Naive thymus-derived CD4-positive, alpha-beta T cell (primary cell): ENCODE measurements at regions of chr19 and their contacts with region 1.

Region 1: GRCh38 chr19:40716655-40717324 is at the starts of genes COQ8B and ITPKC:
- DNase-seq: peak; percentile 96 to 100 (median 99)
- ATAC-seq: peak; percentile 88
- H3K4me3 ChIP-seq: peak within 1 kb of the TSS; percentile 75
- H3K4me3 Mint-ChIP-seq: peak within 1 kb of the TSS; percentile 87 to 99 (median 94)
- H3K27ac ChIP-seq: peak within 1 kb of the TSS; percentile 92
- H3K27ac Mint-ChIP-seq: peak within 1 kb of the TSS; percentile 94 to 99 (median 97)
- H3K4me1 ChIP-seq: peaks cover 39 to 44% of the 10 kb centered on the region in 2 donors
- H3K4me1 Mint-ChIP-seq: peaks cover 42 to 74% (median 67%) of the 10 kb centered on the region in 7 donors
- H3K27me3 ChIP-seq: no peaks in the 10 kb centered on the region
- H3K27me3 Mint-ChIP-seq: no peaks in the 10 kb centered on the region
- total RNA-seq, gene COQ8B: 26.2 to 48.3 (median 43.8) TPM
- total RNA-seq, gene ITPKC: 4.9 to 9.0 (median 7.3) TPM

Region 2: DNA sequence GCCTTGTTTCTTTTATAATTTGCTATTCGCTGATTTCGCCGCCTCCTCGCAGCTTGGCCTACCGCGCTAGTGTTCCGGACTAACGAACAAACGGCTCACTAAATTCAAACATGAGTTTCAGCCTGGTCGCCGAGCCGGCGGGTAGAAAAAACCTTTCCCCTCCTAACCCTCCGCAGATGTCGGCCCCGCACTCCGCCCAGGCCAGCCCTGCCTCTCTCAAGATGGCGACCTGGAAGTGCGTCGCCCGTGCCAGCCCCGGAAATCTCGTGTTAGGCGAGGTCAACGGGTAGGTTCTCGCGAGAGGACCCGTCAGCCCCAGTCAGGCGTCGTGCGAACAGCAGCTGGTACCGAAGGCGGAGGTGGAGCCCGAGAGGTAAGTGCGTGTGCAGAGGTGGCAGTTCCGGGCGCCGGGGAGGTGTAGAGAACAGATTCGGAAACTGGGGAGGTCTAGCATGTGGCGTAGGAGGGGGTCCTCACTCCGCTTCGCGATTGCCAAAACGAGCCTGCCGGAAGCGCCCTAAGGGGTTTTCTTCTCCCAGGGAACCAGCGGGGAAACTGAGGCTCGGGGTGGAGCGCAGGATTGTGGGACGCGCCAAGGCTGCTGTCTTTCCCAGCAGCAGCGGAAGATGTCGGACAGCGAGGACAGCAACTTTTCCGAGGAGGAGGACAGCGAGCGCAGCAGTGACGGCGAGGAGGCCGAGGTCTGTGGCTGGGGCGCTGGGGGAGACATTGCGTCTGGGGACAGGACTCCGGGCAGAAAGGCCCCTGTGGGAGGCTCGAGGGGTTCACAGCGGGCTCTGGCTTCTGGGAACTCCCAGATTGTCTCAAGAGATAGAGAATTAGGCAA is 1271.3 kb before region 1 on chr19 and contains the start of gene SUPT5H:
- CTCF ChIA-PET with region 1: no interaction called
- POLR2A ChIA-PET with region 1: no interaction called
- intact Hi-C with region 1: loop called in 1 of 2 experiments (anchors 10 kb)
- DNase-seq: peak; percentile 84 to 99 (median 97)
- ATAC-seq: peak; percentile 96
- H3K4me3 ChIP-seq: peak within 1 kb of the TSS; percentile 77
- H3K4me3 Mint-ChIP-seq: peak within 1 kb of the TSS; percentile 91 to 100 (median 97)
- H3K27ac ChIP-seq: peak within 1 kb of the TSS; percentile 98
- H3K27ac Mint-ChIP-seq: peak within 1 kb of the TSS; percentile 95 to 100 (median 99)
- H3K4me1 ChIP-seq: peaks cover 35 to 47% of the 10 kb centered on the region in 2 donors
- H3K4me1 Mint-ChIP-seq: peaks cover 38 to 61% (median 48%) of the 10 kb centered on the region in 7 donors
- H3K27me3 ChIP-seq: no peaks in the 10 kb centered on the region
- H3K27me3 Mint-ChIP-seq: no peaks in the 10 kb centered on the region
- total RNA-seq, gene SUPT5H: 180 to 247 (median 203) TPM

Region 3: DNA sequence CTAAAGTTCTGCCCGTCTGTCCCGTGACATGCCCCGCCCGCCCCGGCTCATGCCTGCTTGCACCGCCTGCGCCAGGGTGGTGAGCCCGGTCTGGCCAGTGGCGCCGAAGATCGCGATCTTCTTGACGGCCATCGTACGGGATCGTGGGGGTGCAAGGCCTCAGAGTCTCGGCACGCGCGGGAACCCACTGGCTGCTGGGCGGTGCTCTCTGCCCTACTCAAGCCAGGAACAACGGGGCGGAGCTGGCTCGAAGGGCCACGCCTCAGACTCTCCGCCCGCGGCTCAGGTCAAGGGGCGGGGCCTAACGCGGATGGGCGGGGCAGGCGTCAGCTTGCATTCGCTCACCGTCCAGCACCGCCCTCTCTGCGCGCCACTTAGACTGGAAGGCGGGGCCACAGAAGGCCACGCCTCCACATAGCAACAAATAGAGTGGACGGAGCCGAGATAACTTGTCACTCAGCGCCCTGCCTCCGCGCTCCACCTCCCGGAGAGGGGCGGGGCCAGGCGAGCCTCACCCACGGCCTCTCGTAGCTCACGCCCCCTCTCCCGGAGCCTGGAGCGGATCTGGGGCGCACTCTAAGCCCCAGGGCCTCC is 251.1 kb before region 1 on chr19 and contains the start of gene BLVRB:
- CTCF ChIA-PET with region 1: no interaction called
- POLR2A ChIA-PET with region 1: no interaction called
- intact Hi-C with region 1: loop called (anchors 5 to 10 kb)
- DNase-seq: peak; percentile 98 to 100 (median 99)
- ATAC-seq: peak; percentile 90
- H3K4me3 ChIP-seq: peak within 1 kb of the TSS; percentile 44
- H3K4me3 Mint-ChIP-seq: peak within 1 kb of the TSS; percentile 83 to 95 (median 86)
- H3K27ac ChIP-seq: peak within 1 kb of the TSS; percentile 66
- H3K27ac Mint-ChIP-seq: peak within 1 kb of the TSS; percentile 70 to 94 (median 87)
- H3K4me1 ChIP-seq: peaks cover 0 to 7% of the 10 kb centered on the region in 2 donors
- H3K4me1 Mint-ChIP-seq: peaks cover 18 to 27% (median 25%) of the 10 kb centered on the region in 7 donors
- H3K27me3 ChIP-seq: peaks cover 3 to 4% of the 10 kb centered on the region in 2 donors
- H3K27me3 Mint-ChIP-seq: peaks cover 6 to 28% (median 7%) of the 10 kb centered on the region in 5 donors
- total RNA-seq, gene BLVRB: 11.0 to 42.2 (median 13.3) TPM

Region 4: DNA sequence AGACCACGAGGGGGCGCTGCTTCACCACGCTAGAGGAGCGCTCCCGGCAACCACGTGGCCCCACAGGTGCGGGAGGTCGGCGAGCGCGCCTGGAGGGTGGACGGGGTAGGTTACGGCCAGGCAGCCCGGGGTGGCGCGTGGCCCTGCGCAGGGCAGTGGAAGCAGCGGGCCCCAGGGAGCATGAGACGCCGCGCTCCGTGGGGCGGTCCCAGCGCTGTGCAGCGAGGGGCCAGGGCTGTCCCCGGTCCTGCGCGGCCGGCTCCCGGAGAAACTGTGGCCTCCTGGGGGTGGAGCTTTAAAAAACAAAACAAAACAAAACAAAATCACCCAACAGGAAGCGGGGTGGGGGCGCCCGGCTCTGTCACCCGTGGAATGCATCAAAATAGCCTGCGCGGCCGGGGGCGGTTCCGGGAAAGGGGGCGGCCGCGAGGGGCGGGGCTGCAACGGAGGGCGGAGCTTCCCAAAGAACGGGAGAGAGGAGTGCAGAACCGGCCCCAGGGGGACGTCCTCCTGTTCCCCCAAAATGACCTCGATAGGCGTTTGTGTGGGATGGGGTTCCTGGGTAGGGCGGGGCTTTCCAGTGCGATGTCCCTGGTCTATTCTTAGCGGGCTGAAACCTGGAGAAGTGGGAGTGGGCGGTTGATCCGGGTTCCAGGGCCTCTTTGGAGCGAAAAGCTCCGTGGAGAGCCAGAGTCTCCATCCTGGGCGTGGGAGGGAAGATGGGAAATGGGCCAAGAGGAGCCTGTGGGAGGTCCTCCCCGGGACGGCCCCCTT is 53.7 kb before region 1 on chr19:
- CTCF ChIA-PET with region 1: interaction called, 3 read pairs
- POLR2A ChIA-PET with region 1: interaction called, 3 read pairs
- intact Hi-C with region 1: loop called (anchors 1 kb)
- DNase-seq: peak; percentile 81 to 96 (median 92)
- ATAC-seq: peak; percentile 96
- H3K4me3 ChIP-seq: peak overlapping the region; percentile 75
- H3K4me3 Mint-ChIP-seq: peak overlapping the region; percentile 76 to 91 (median 84)
- H3K27ac ChIP-seq: peak overlapping the region; percentile 75
- H3K27ac Mint-ChIP-seq: peak overlapping the region; percentile 67 to 91 (median 84)
- H3K4me1 ChIP-seq: peaks cover 0 to 7% of the 10 kb centered on the region in 2 donors
- H3K4me1 Mint-ChIP-seq: peaks cover 0 to 27% (median 6%) of the 10 kb centered on the region in 7 donors
- H3K27me3 ChIP-seq: no peaks in the 10 kb centered on the region
- H3K27me3 Mint-ChIP-seq: peaks cover 0 to 4% (median 0%) of the 10 kb centered on the region in 5 donors

Region 5: DNA sequence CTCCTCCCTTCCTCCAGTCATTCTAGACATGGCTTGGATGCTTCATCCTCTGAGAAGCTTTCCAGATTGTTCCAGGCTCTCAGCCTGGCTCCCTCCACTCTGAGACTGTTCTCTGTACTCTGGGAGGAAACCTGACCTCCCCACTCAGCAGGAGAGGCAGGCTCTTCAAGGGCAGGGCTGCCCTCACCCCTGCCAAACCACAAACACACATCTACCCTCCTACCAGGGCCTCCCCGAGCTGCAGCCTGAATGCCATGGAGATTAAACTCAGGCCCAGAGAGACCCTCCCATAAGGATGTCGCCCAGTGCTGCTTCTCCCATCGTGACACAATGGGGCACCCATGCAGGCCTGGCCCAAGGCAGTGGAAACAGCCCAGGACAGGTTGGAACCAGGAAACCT is 42.5 kb before region 1 on chr19:
- CTCF ChIA-PET with region 1: no interaction called
- POLR2A ChIA-PET with region 1: no interaction called
- intact Hi-C with region 1: no loop called
- DNase-seq: no peak
- ATAC-seq: peak; percentile 42
- H3K4me3 ChIP-seq: no peak overlapping the region
- H3K4me3 Mint-ChIP-seq: no peak overlapping the region
- H3K27ac ChIP-seq: no peak overlapping the region
- H3K27ac Mint-ChIP-seq: no peak overlapping the region
- H3K4me1 ChIP-seq: no peaks in the 10 kb centered on the region
- H3K4me1 Mint-ChIP-seq: peaks cover 0 to 1% (median 0%) of the 10 kb centered on the region in 7 donors
- H3K27me3 ChIP-seq: no peaks in the 10 kb centered on the region
- H3K27me3 Mint-ChIP-seq: no peaks in the 10 kb centered on the region

Region 6: DNA sequence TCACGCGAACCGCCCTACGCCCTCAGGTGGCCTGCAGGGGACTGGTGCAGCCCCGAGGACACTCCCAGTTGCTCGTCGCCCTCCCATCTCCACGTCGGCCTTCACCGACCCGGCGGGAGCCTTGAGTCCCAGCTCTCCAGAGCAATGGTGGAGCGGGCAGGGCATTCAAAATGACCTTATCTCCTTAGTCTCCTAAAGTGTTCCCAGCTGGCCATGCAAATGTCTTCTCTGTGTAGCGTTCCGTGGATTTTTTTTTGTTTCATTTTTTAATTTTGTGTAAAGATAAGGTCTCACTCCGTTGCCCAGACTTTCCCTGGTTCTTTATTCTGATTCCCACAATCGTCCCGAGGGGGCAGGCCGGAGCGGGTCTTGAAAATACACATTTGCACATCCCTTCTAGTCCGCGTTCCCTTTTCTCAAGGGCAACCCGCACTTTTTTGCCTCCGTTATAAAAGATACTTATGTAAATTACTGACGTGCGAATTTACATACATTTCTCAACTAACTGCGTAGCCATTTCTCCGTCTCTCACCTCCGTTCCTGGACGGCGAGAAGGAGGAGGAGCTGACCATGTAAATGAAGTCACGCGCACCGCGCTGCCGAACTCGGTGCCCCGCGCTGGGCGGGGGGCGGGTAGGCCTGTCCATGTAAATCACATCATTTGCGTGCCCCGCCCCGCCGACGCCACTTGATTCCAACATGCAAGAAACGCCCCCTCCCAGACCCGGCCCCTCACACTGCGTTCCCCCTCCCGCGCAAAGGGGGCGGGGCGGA is 81.6 kb after region 1 on chr19:
- CTCF ChIA-PET with region 1: interaction called, 4 read pairs
- POLR2A ChIA-PET with region 1: interaction called, 19 read pairs
- intact Hi-C with region 1: loop called (anchors 1 kb)
- DNase-seq: peak; percentile 48 to 100 (median 100)
- ATAC-seq: peak; percentile 92
- H3K4me3 ChIP-seq: peak overlapping the region; percentile 77
- H3K4me3 Mint-ChIP-seq: peak overlapping the region; percentile 89 to 100 (median 95)
- H3K27ac ChIP-seq: peak overlapping the region; percentile 90
- H3K27ac Mint-ChIP-seq: peak overlapping the region; percentile 96 to 100 (median 99)
- H3K4me1 ChIP-seq: peaks cover 35 to 39% of the 10 kb centered on the region in 2 donors
- H3K4me1 Mint-ChIP-seq: peaks cover 28 to 56% (median 48%) of the 10 kb centered on the region in 7 donors
- H3K27me3 ChIP-seq: no peaks in the 10 kb centered on the region
- H3K27me3 Mint-ChIP-seq: no peaks in the 10 kb centered on the region

Region 7: GRCh38 chr19:40827386-40828247 is 110.8 kb after region 1 on chr19:
- CTCF ChIA-PET with region 1: no interaction called
- POLR2A ChIA-PET with region 1: no interaction called
- intact Hi-C with region 1: no loop called
- DNase-seq: no peak
- ATAC-seq: no peak
- H3K4me3 ChIP-seq: peak overlapping the region; percentile 21
- H3K4me3 Mint-ChIP-seq: peak overlapping the region in 8 of 10 donors; percentile 22 to 76 (median 50)
- H3K27ac ChIP-seq: peak overlapping the region; percentile 5
- H3K27ac Mint-ChIP-seq: peak overlapping the region; percentile 75 to 98 (median 95)
- H3K4me1 ChIP-seq: peaks cover 5 to 15% of the 10 kb centered on the region in 2 donors
- H3K4me1 Mint-ChIP-seq: peaks cover 23 to 53% (median 33%) of the 10 kb centered on the region in 7 donors
- H3K27me3 ChIP-seq: no peaks in the 10 kb centered on the region
- H3K27me3 Mint-ChIP-seq: no peaks in the 10 kb centered on the region

Region 8: GRCh38 chr19:41397086-41398049 is 680.6 kb after region 1 on chr19 and contains the starts of genes BCKDHA and EXOSC5:
- CTCF ChIA-PET with region 1: no interaction called
- POLR2A ChIA-PET with region 1: no interaction called
- intact Hi-C with region 1: loop called (anchors 1 to 5 kb)
- DNase-seq: peak; percentile 96 to 100 (median 99)
- ATAC-seq: peak; percentile 99
- H3K4me3 ChIP-seq: peak within 1 kb of the TSS; percentile 96
- H3K4me3 Mint-ChIP-seq: peak within 1 kb of the TSS; percentile 95 to 99 (median 98)
- H3K27ac ChIP-seq: peak within 1 kb of the TSS; percentile 89
- H3K27ac Mint-ChIP-seq: peak within 1 kb of the TSS; percentile 99 to 100 (median 100)
- H3K4me1 ChIP-seq: peaks cover 19 to 23% of the 10 kb centered on the region in 2 donors
- H3K4me1 Mint-ChIP-seq: peaks cover 33 to 61% (median 50%) of the 10 kb centered on the region in 7 donors
- H3K27me3 ChIP-seq: no peaks in the 10 kb centered on the region
- H3K27me3 Mint-ChIP-seq: no peaks in the 10 kb centered on the region
- total RNA-seq, gene BCKDHA: 19.4 to 25.0 (median 20.5) TPM
- total RNA-seq, gene EXOSC5: 15.0 to 37.5 (median 20.6) TPM